Activated T-helper 1 cell treated with anti-CD3 and anti-CD28 coated beads, Interleukin-12 subunit alpha, Interleukin-12 subunit beta, Interleukin-2, Interleukin-4 antibody, amounts not matched to agents 30 ng/mL and 10 ng/mL and 1 ng/mL, durations not matched to agents 14 hours and 24 hours and 36 hours (primary cell): ENCODE measurements at regions of chr3 and their contacts with region 1.

Region 1: GRCh38 chr3:146664403-146664802 is 59.3 kb upstream of the PLSCR5 start:
- DNase-seq: no peak
- H3K4me3 Mint-ChIP-seq: no peak overlapping the region
- H3K27ac Mint-ChIP-seq: no peak overlapping the region
- H3K4me1 Mint-ChIP-seq: no peaks in the 10 kb centered on the region
- H3K27me3 Mint-ChIP-seq: peaks cover 7% of the 10 kb centered on the region

Region 2: GRCh38 chr3:146679191-146679590 is 14.8 kb after region 1 on chr3:
- intact Hi-C with region 1: loop called (anchors 1 kb)
- DNase-seq: no peak
- H3K4me3 Mint-ChIP-seq: no peak overlapping the region
- H3K27ac Mint-ChIP-seq: no peak overlapping the region
- H3K4me1 Mint-ChIP-seq: no peaks in the 10 kb centered on the region
- H3K27me3 Mint-ChIP-seq: no peaks in the 10 kb centered on the region